Activated T-helper 1 cell treated with anti-CD3 and anti-CD28 coated beads, Interleukin-12 subunit alpha, Interleukin-12 subunit beta, Interleukin-2, Interleukin-4 antibody, amounts not matched to agents 30 ng/mL and 10 ng/mL and 1 ng/mL, durations not matched to agents 14 hours and 24 hours and 36 hours (primary cell): ENCODE measurements at regions of chr1 and their contacts with region 1.

Region 1: GRCh38 chr1:210400043-210400840 is 71.5 kb downstream of the HHAT start:
- DNase-seq: peak; percentile 20
- H3K4me3 Mint-ChIP-seq: peak overlapping the region; percentile 34
- H3K27ac Mint-ChIP-seq: peak overlapping the region; percentile 63
- H3K4me1 Mint-ChIP-seq: peaks cover 41% of the 10 kb centered on the region
- H3K27me3 Mint-ChIP-seq: peaks cover 6% of the 10 kb centered on the region

Region 2: DNA sequence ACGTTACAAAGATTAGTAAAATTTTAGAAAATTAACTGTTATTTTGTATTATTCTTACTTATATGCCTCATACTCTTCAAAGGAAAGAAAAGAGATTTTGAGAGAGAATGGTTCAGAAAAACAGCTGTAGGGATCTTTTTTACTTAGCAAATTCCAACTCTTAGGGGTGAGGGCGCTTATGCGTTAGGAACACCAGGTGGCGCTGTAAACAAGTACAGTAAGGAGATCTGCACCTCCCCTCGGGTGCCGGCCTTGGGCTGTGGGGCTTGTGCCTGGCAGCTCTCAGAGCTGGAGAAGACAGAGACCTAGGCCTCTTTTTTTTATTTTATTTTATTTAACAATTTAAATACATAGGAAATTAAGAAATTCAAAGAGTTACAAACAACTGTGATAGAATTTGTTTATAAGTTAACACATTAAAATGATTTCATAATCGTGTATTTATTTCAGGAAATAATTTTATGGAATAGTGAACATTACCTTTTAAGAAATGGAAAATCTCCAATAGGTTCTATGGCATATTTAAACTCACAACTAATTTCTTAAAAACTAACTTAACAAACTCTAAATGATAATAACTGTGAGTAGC is 539.9 kb before region 1 on chr1:
- intact Hi-C with region 1: loop called (anchors 2 kb)
- DNase-seq: peak; percentile 50
- H3K4me3 Mint-ChIP-seq: no peak overlapping the region
- H3K27ac Mint-ChIP-seq: no peak overlapping the region
- H3K4me1 Mint-ChIP-seq: no peaks in the 10 kb centered on the region
- H3K27me3 Mint-ChIP-seq: peaks cover 18% of the 10 kb centered on the region

Region 3: DNA sequence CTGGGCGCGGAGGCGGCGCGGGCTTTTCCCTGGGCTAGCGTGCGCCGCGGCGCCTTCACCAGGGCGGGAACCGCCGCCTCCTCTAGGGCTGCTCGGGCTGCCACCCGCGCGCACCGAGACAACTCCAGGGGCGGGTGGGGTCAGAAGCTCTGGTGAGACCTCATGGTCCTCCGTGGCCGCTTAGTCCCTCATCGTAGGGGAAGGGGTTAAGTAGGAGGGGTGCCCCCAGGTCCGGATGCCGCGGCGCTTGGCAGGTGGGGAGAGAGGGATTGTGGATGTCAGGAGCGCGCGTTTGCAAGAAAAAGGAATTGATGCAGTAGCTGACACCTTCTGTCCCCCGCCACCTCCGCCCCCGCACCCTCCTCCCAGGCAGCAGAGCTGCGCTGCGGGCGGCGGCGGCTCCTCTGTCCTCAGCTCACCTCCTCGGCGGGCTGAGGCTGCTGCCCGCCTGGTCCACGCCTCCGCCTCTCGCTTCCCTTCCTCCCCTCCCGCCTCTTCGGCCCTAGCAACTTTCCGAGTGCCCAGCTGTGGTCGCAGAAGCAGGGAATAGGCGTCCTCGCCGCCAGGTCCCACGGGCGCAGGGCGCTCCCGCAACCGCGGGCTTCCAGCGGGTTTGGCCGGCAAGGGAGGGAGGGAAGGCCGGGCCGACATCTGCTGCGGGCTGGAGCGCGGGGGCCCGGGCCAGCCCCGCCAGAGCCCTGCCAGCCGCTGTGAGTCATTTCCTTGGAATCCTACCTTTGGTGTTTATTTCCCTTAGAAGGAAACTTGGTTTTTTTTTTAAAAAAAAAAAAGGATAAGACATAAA is 166.8 kb before region 1 on chr1:
- intact Hi-C with region 1: loop called (anchors 10 kb)
- DNase-seq: no peak
- H3K4me3 Mint-ChIP-seq: peak overlapping the region; percentile 45
- H3K27ac Mint-ChIP-seq: no peak overlapping the region
- H3K4me1 Mint-ChIP-seq: peaks cover 6% of the 10 kb centered on the region
- H3K27me3 Mint-ChIP-seq: peaks cover 48% of the 10 kb centered on the region

Region 4: GRCh38 chr1:210342986-210343780 is 57.1 kb before region 1 on chr1:
- intact Hi-C with region 1: loop called (anchors 2 kb)
- DNase-seq: no peak
- H3K4me3 Mint-ChIP-seq: no peak overlapping the region
- H3K27ac Mint-ChIP-seq: no peak overlapping the region
- H3K4me1 Mint-ChIP-seq: peaks cover 29% of the 10 kb centered on the region
- H3K27me3 Mint-ChIP-seq: peaks cover 9% of the 10 kb centered on the region

Region 5: GRCh38 chr1:210373885-210374599 is 26.2 kb before region 1 on chr1:
- intact Hi-C with region 1: loop called (anchors 1 kb)
- DNase-seq: peak; percentile 57
- H3K4me3 Mint-ChIP-seq: no peak overlapping the region
- H3K27ac Mint-ChIP-seq: peak overlapping the region; percentile 62
- H3K4me1 Mint-ChIP-seq: peaks cover 19% of the 10 kb centered on the region
- H3K27me3 Mint-ChIP-seq: peaks cover 5% of the 10 kb centered on the region

Region 6: GRCh38 chr1:210477381-210477783 is 77.1 kb after region 1 on chr1:
- intact Hi-C with region 1: no loop called
- DNase-seq: no peak
- H3K4me3 Mint-ChIP-seq: no peak overlapping the region
- H3K27ac Mint-ChIP-seq: no peak overlapping the region
- H3K4me1 Mint-ChIP-seq: no peaks in the 10 kb centered on the region
- H3K27me3 Mint-ChIP-seq: peaks cover 4% of the 10 kb centered on the region